ENCODE measurements at regions of chr10 and their contacts with region 1.

Region 1: DNA sequence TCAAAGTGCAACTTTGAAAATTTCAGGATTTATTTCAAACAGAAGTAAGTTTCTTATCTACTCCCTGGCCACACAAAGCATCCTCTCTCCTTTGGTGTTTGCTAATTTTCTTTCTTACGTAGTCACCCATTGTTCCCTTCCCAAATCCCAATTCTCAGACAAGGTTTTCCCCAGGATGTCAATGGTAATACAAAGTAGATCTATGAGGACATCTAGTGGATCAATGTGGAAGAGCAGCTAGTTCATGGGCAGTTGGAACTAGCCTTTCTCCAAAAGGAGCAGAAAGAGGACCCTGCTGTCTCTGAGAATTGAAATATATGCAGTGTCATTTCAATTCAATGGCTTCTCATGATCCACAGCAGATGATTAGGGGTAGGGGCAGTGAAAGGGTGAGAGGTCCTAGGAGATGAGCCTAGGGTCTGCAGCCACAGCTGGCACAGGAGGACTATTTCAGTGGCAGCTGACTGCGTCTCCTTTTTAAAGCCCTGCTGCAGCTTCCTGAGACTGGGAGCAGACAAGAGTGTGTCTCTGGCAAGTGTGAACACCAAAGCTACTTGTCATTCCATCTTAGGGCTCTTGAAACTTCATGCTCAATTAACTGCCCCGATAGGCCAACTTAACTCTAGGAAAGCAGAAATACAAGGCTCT is 632.6 kb downstream of the KCNMA1 start:
- DNase-seq: peak; percentile 47
- H3K4me3 Mint-ChIP-seq: no peak overlapping the region
- H3K27ac Mint-ChIP-seq: no peak overlapping the region
- H3K4me1 Mint-ChIP-seq: no peaks in the 10 kb centered on the region
- H3K27me3 Mint-ChIP-seq: peaks cover 51% of the 10 kb centered on the region
- CTCF ChIP-seq: peak; percentile 70

Region 2: DNA sequence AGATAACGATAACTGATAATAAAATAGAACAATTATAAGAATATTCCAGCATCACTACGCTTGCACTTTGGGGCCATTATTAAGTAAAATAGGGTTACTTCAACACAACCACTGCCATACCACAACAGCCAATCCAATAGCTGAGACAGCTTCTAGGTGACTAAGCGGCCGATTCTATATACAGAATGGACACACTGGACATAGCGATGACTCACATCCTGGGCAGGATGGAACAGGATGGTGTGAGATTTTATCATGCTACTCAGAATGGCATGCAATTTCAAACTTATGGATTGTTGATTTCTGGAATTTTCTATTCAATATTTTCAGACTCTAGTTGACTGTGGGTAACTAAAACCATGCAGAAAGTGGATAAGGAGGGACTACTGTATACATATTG is 652.7 kb before region 1 on chr10:
- CTCF ChIA-PET with region 1: no interaction called
- intact Hi-C with region 1: no loop called
- DNase-seq: no peak
- H3K4me3 Mint-ChIP-seq: no peak overlapping the region
- H3K27ac Mint-ChIP-seq: no peak overlapping the region
- H3K4me1 Mint-ChIP-seq: no peaks in the 10 kb centered on the region
- H3K27me3 Mint-ChIP-seq: no peaks in the 10 kb centered on the region
- CTCF ChIP-seq: no peak

Region 3: DNA sequence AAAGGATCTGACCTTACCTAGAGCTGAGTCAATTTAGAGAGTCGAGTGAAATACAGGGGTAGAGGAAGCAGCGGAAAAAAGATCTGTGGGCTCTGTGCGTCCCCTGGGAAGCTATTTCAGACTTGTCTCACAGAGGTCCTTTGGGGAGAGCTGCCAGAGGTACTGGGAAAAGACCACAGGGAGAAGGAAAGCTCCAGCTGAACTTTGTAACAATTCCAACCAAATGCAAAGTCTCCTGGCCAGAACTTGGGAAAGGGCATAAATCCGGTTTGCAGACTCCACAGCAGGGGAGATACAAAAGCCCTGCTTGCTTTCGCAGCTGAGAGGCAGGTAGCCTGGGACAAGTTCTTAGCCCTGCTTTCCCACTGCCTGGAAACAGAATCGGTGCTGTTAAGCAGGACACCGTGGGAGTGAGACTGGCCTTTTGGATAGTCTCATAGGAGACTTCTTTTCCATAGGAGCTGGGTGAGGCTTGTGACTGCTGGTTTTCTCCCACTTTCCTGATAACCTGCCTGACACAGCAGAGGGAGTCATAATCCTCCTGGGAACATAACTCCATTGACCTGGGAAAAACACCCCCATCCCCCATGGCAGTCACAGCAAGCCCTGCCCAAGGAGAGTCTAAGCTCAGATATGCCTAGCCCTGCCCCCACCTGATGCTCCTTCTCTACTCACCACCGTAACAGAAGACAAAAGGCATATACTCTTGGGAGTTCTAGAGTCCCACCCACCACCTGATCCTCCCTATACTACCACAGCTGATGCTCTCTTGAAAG is 293.6 kb before region 1 on chr10:
- CTCF ChIA-PET with region 1: no interaction called
- intact Hi-C with region 1: loop called (anchors 5 kb)
- DNase-seq: no peak
- H3K4me3 Mint-ChIP-seq: no peak overlapping the region
- H3K27ac Mint-ChIP-seq: no peak overlapping the region
- H3K4me1 Mint-ChIP-seq: no peaks in the 10 kb centered on the region
- H3K27me3 Mint-ChIP-seq: no peaks in the 10 kb centered on the region
- CTCF ChIP-seq: no peak

Region 4: GRCh38 chr10:76840802-76841201 is 164.2 kb before region 1 on chr10:
- CTCF ChIA-PET with region 1: no interaction called
- intact Hi-C with region 1: no loop called
- DNase-seq: no peak
- H3K4me3 Mint-ChIP-seq: no peak overlapping the region
- H3K27ac Mint-ChIP-seq: no peak overlapping the region
- H3K4me1 Mint-ChIP-seq: no peaks in the 10 kb centered on the region
- H3K27me3 Mint-ChIP-seq: no peaks in the 10 kb centered on the region
- CTCF ChIP-seq: no peak

Region 5: GRCh38 chr10:77111611-77112550 is 106.8 kb after region 1 on chr10:
- CTCF ChIA-PET with region 1: no interaction called
- intact Hi-C with region 1: loop called (anchors 5 kb)
- DNase-seq: peak; percentile 44
- H3K4me3 Mint-ChIP-seq: no peak overlapping the region
- H3K27ac Mint-ChIP-seq: no peak overlapping the region
- H3K4me1 Mint-ChIP-seq: peaks cover 6% of the 10 kb centered on the region
- H3K27me3 Mint-ChIP-seq: peaks cover 45% of the 10 kb centered on the region
- CTCF ChIP-seq: peak; percentile 80

Measured in Calu3 (cell line).